ENCODE measurements at regions of chr10 and their contacts with region 1.

Region 1: DNA sequence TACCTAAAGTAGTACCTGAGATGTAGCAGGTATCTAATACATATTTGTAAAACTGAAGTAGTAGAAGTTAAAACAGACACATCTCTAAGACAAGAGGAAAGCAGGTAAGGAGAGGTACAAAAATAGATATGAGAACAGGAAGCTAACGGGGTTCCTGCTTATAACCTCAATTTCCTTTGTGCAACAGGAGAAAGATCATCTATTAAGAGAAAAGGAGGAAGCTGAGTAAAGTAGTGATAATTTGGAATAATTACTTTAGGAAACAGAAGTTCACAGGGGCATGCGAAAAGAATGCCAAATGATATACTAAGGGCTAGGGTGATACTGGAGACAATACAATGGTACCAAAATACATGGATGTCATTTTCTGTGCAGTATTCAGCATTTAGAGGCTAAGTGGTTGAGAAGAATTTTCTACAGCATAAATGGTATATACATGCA is 108.7 kb downstream of the NRBF2 start:
- DNase-seq: peak in 1 of 5 donors; percentile 34
- H3K4me3 ChIP-seq: peak overlapping the region in 1 of 2 donors; percentile 3
- H3K4me3 Mint-ChIP-seq: peak overlapping the region; percentile 34 to 85 (median 80)
- H3K27ac ChIP-seq: peak overlapping the region; percentile 11
- H3K27ac Mint-ChIP-seq: peak overlapping the region; percentile 60 to 93 (median 75)
- H3K4me1 ChIP-seq: peaks cover 88% of the 10 kb centered on the region
- H3K4me1 Mint-ChIP-seq: peaks cover 55 to 84% (median 71%) of the 10 kb centered on the region in 4 donors
- H3K27me3 ChIP-seq: no peaks in the 10 kb centered on the region
- H3K27me3 Mint-ChIP-seq: no peaks in the 10 kb centered on the region

Region 2: DNA sequence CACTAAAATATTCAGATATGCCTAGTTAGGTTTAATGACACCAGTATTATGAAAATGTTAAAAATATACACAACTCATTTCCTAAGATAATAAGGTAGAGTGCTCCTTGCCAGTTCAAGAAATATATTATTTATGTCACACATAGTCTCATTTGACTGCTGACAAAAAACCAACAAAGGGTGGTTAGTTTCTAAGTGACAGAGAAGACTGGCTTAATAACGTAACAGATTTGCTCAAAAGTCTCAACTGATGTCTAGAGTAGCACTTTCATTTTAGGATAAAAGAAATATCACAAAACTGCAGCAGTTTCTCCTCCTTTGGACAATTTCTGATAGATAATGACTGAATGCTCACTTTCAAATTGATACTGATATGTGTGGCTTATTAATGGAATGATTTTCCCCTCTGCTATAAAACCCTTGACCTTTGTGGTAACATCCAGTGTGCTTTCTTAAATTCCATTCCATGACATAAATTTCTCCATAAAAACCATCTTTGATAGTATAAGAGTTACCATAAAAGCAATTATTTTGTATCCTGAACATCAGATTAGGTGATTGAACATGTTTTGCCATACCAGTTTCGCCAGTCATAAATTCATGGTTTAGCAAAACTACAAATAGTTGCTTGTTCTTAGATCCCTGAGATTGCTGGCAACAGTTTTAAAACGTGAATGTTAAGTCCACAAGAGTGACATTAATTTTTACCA is 14.5 kb before region 1 on chr10:
- CTCF ChIA-PET with region 1: interaction called, 3 read pairs
- POLR2A ChIA-PET with region 1: interaction called, 4 read pairs
- intact Hi-C with region 1: loop called (anchors 2 kb)
- DNase-seq: peak in 2 of 5 donors; percentile 22 to 43
- H3K4me3 ChIP-seq: no peak overlapping the region
- H3K4me3 Mint-ChIP-seq: peak overlapping the region in 6 of 8 donors; percentile 16 to 76 (median 60)
- H3K27ac ChIP-seq: no peak overlapping the region
- H3K27ac Mint-ChIP-seq: peak overlapping the region; percentile 38 to 95 (median 89)
- H3K4me1 ChIP-seq: peaks cover 64% of the 10 kb centered on the region
- H3K4me1 Mint-ChIP-seq: peaks cover 42 to 73% (median 48%) of the 10 kb centered on the region in 4 donors
- H3K27me3 ChIP-seq: no peaks in the 10 kb centered on the region
- H3K27me3 Mint-ChIP-seq: no peaks in the 10 kb centered on the region

Region 3: DNA sequence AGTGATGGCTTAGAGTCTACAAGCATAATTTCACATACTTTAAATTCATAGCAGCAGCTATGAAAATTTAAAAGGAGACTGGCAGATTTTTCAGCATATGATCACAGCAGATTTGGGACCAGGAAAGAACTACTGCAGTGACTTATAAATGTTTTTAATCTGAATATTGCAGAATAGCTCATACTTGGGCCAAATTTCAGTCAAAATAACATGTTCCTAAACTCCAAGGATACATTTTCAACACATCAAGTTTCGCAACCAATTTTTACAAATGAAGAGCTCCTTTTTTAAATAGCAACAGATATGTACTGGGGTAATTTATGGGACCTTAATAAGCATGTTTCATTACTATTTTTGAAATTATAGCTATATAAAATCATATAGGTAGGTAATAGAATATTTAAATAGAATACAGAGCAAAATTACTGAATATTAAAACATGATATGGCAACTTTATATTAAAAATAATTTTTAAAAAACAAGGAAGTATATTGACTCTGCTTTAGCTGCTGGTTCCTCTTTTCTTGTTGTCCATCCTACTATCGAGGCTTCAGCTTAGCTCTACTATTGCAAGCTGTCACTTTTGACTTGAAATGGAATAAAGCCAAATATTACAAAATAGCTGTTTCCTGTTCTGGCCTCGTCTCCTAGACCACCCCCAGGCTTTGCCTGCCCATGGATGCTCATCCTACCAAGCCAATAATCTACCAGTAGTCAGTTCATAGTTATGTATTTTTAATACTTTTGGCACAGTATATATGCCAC is 14.3 kb after region 1 on chr10:
- CTCF ChIA-PET with region 1: interaction called, 4 read pairs
- POLR2A ChIA-PET with region 1: interaction called, 7 read pairs
- intact Hi-C with region 1: loop called (anchors 2 kb)
- DNase-seq: no peak
- H3K4me3 ChIP-seq: no peak overlapping the region
- H3K4me3 Mint-ChIP-seq: peak overlapping the region in 5 of 8 donors; percentile 7 to 58 (median 25)
- H3K27ac ChIP-seq: no peak overlapping the region
- H3K27ac Mint-ChIP-seq: peak overlapping the region; percentile 0 to 82 (median 44)
- H3K4me1 ChIP-seq: peaks cover 88% of the 10 kb centered on the region
- H3K4me1 Mint-ChIP-seq: peaks cover 56 to 95% (median 76%) of the 10 kb centered on the region in 4 donors
- H3K27me3 ChIP-seq: no peaks in the 10 kb centered on the region
- H3K27me3 Mint-ChIP-seq: no peaks in the 10 kb centered on the region

Region 4: DNA sequence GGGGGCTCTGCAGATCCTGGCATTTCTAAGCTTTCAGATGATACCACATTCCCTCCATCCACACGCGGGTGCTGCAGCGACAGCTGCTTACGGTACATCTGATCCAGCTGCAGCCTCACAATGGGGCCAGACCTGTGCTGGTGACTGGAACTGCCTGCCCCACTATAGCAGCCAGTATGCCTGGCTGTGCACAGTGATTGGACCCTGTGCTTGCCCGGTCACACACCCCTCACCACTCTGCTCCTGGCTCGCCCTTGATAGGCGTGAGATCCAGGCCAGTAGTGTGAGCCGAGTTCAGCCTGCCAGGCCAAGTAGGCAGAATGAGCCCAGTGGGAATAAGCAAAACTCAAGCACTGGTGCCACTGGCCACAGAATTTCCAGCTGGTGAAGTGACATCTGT is 56.1 kb after region 1 on chr10:
- CTCF ChIA-PET with region 1: no interaction called
- POLR2A ChIA-PET with region 1: no interaction called
- intact Hi-C with region 1: no loop called
- DNase-seq: no peak
- H3K4me3 ChIP-seq: no peak overlapping the region
- H3K4me3 Mint-ChIP-seq: no peak overlapping the region
- H3K27ac ChIP-seq: no peak overlapping the region
- H3K27ac Mint-ChIP-seq: no peak overlapping the region
- H3K4me1 ChIP-seq: no peaks in the 10 kb centered on the region
- H3K4me1 Mint-ChIP-seq: peaks cover 4 to 11% (median 9%) of the 10 kb centered on the region in 4 donors
- H3K27me3 ChIP-seq: no peaks in the 10 kb centered on the region
- H3K27me3 Mint-ChIP-seq: no peaks in the 10 kb centered on the region